Calu3 (cell line): ENCODE measurements at regions of chrX and their contacts with region 1.

Region 1: GRCh38 chrX:46376246-46376885 is 168.9 kb downstream of the ZNF674 start:
- DNase-seq: peak; percentile 55
- H3K4me3 Mint-ChIP-seq: no peak overlapping the region
- H3K27ac Mint-ChIP-seq: peak overlapping the region; percentile 85
- H3K4me1 Mint-ChIP-seq: peaks cover 58% of the 10 kb centered on the region
- H3K27me3 Mint-ChIP-seq: no peaks in the 10 kb centered on the region
- CTCF ChIP-seq: peak; percentile 25

Region 2: DNA sequence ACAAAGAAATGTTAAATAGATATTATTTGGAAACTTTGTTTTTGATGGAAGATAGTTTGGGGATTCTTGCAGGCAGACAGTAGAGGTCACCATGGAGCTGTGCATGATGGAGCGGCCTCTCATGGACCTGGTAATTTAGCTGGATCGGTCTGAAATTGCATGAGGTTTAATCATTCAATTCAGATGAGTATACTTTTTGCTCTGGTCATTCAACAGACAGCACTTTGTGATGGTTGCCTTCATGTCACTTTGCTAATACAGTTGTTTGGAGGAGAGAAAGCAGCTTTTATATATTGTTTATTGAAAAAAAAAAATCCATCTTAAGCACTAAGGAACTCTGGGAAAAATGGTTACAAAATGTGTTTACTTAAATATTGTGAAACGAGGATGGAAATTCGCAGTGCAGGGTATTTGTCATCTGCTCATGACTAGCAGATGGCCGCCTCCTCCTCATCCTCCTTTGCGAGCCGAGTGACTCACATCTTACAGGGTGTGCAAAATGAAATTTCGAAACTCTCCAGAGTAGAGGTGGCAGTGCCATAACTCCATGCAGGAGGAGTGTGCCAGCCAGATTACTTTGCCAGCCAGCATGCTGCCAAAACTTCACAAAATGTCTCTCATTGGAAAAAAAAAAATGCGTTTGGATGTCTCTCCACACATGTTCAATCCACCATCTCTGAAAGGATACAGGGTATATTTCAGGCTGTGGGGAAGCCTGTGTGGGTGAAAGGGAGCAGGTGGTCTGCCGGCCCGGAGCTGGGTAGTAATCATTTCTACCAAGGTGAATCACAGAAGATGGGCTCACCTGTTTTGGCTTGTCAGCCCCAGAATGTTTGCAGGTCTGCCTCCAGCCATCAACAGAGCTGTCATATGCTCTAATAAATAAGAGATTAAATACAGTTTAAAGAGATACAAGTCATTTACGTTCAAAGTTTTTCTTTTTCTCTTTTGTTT is 860.8 kb before region 1 on chrX:
- CTCF ChIA-PET with region 1: interaction called, 8 read pairs
- intact Hi-C with region 1: loop called (anchors 5 kb)
- DNase-seq: peak; percentile 63
- H3K4me3 Mint-ChIP-seq: peak overlapping the region; percentile 57
- H3K27ac Mint-ChIP-seq: peak overlapping the region; percentile 80
- H3K4me1 Mint-ChIP-seq: peaks cover 37% of the 10 kb centered on the region
- H3K27me3 Mint-ChIP-seq: no peaks in the 10 kb centered on the region
- CTCF ChIP-seq: peak; percentile 57

Region 3: DNA sequence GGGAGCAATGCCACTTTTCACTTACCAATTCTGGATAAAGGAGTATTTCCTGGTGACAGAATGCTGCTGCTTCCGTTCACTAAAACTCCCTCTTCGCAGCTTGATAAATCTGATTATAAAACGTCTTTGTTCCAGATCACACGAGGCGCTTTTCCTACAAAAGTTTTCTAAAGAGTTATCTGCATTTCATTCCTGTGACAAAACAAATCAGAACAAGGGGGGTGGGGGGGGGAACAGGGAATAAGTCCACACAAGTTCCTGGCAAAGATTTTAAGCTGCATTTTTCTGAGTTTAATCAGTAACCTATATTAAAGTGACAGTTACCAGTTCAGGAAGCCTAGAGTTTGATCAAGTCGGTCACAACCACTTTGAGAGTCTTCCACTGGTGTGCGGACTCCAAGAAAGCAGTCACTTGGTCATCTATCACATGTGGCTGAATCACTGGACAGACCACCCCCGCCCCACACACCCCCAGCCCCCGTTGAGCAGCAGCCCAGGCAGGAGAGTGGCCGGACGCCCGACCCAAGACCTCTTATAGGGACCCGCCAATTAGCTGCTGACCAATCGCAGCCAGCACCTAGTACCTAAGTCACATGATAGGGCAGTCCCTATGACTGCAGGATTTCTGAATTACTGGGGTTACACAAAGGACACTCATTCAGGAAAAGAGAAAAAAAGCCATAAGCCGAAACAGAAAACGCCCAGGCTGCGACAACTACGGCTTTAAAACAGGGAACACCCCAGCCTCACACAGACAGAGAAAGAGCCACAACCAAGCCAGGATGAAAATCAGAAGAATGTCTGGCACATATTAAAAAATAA is 606.4 kb before region 1 on chrX:
- CTCF ChIA-PET with region 1: no interaction called
- intact Hi-C with region 1: loop called (anchors 10 kb)
- DNase-seq: peak; percentile 84
- H3K4me3 Mint-ChIP-seq: peak overlapping the region; percentile 89
- H3K27ac Mint-ChIP-seq: peak overlapping the region; percentile 97
- H3K4me1 Mint-ChIP-seq: peaks cover 30% of the 10 kb centered on the region
- H3K27me3 Mint-ChIP-seq: no peaks in the 10 kb centered on the region
- CTCF ChIP-seq: no peak

Region 4: DNA sequence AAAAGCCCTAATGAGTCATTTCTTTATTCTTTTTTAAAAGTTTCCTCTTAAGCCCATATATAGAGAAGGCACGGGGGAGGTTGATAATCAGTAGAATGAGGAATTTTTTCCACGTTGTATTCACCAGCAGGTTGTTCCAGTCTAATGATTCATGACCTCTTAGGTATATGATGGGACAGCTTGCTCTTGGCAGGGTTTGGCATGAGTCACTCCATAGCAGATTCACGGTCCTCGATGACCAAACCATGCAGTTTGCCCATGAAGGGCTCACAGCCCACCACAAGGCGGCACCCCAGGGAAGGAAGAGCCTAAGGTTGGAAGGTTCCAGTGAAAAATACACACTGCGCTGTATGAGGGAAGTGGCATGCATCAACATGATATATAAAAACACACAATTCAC is 551.9 kb before region 1 on chrX:
- CTCF ChIA-PET with region 1: interaction called, 8 read pairs
- intact Hi-C with region 1: loop called (anchors 1 kb)
- DNase-seq: peak; percentile 89
- H3K4me3 Mint-ChIP-seq: no peak overlapping the region
- H3K27ac Mint-ChIP-seq: peak overlapping the region; percentile 85
- H3K4me1 Mint-ChIP-seq: peaks cover 38% of the 10 kb centered on the region
- H3K27me3 Mint-ChIP-seq: no peaks in the 10 kb centered on the region
- CTCF ChIP-seq: peak; percentile 48

Region 5: DNA sequence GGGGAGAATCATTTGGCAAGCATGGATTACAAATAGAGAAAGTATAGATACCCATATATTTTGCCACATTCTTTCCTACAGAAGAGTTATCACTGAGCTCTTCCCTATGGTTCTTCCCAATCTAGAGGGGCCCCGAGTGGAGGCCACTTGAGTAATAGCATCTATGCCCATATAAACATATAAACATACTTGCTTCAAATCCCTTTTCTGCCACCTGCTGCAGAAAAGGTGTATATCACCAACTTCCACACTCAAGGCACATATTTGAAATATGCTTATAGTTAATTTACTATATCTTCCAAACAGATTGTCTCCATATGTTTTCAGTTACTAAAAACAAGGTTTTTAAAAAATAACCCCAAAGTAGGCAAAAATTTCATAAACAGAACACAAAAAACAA is 532.8 kb before region 1 on chrX:
- CTCF ChIA-PET with region 1: interaction called, 7 read pairs
- intact Hi-C with region 1: loop called (anchors 5 kb)
- DNase-seq: no peak
- H3K4me3 Mint-ChIP-seq: peak overlapping the region; percentile 25
- H3K27ac Mint-ChIP-seq: no peak overlapping the region
- H3K4me1 Mint-ChIP-seq: peaks cover 45% of the 10 kb centered on the region
- H3K27me3 Mint-ChIP-seq: no peaks in the 10 kb centered on the region
- CTCF ChIP-seq: no peak

Region 6: GRCh38 chrX:46016296-46016695 is 360.1 kb before region 1 on chrX:
- CTCF ChIA-PET with region 1: no interaction called
- intact Hi-C with region 1: no loop called
- DNase-seq: no peak
- H3K4me3 Mint-ChIP-seq: no peak overlapping the region
- H3K27ac Mint-ChIP-seq: no peak overlapping the region
- H3K4me1 Mint-ChIP-seq: no peaks in the 10 kb centered on the region
- H3K27me3 Mint-ChIP-seq: no peaks in the 10 kb centered on the region
- CTCF ChIP-seq: no peak

Region 7: GRCh38 chrX:46208225-46208854 is 168.0 kb before region 1 on chrX:
- CTCF ChIA-PET with region 1: no interaction called
- intact Hi-C with region 1: loop called (anchors 5 kb)
- DNase-seq: peak; percentile 8
- H3K4me3 Mint-ChIP-seq: no peak overlapping the region
- H3K27ac Mint-ChIP-seq: peak overlapping the region; percentile 63
- H3K4me1 Mint-ChIP-seq: peaks cover 51% of the 10 kb centered on the region
- H3K27me3 Mint-ChIP-seq: no peaks in the 10 kb centered on the region
- CTCF ChIP-seq: no peak

Region 8: DNA sequence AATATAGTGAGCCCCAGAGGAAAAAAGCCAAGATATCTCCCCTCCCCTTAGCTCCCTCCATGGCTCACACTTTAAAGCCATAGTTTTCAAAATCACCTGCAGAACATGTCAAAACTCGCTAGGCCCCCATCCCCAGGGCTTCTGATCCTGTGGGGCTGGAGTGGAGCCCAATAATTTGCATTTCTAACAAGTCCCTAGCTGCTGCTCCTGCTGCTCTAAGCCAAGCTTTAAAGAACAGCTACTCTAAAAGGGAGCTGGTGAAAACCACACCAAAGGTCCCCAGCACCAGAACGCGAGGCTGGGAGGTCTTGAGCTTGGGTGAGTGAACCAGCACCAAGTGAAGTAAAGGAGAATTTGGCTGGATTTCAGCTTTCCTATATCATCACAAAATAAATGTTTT is 68.3 kb before region 1 on chrX:
- CTCF ChIA-PET with region 1: no interaction called
- intact Hi-C with region 1: no loop called
- DNase-seq: no peak
- H3K4me3 Mint-ChIP-seq: no peak overlapping the region
- H3K27ac Mint-ChIP-seq: no peak overlapping the region
- H3K4me1 Mint-ChIP-seq: peaks cover 15% of the 10 kb centered on the region
- H3K27me3 Mint-ChIP-seq: no peaks in the 10 kb centered on the region
- CTCF ChIP-seq: no peak

Region 9: GRCh38 chrX:46325312-46325877 is 51.0 kb before region 1 on chrX:
- CTCF ChIA-PET with region 1: interaction called, 11 read pairs
- intact Hi-C with region 1: loop called (anchors 2 kb)
- DNase-seq: peak; percentile 90
- H3K4me3 Mint-ChIP-seq: peak overlapping the region; percentile 31
- H3K27ac Mint-ChIP-seq: peak overlapping the region; percentile 94
- H3K4me1 Mint-ChIP-seq: peaks cover 65% of the 10 kb centered on the region
- H3K27me3 Mint-ChIP-seq: no peaks in the 10 kb centered on the region
- CTCF ChIP-seq: no peak